Dorsolateral prefrontal cortex (tissue), 120 donors: ENCODE measurements at regions of chr1 and their contacts with region 1.

Region 1: DNA sequence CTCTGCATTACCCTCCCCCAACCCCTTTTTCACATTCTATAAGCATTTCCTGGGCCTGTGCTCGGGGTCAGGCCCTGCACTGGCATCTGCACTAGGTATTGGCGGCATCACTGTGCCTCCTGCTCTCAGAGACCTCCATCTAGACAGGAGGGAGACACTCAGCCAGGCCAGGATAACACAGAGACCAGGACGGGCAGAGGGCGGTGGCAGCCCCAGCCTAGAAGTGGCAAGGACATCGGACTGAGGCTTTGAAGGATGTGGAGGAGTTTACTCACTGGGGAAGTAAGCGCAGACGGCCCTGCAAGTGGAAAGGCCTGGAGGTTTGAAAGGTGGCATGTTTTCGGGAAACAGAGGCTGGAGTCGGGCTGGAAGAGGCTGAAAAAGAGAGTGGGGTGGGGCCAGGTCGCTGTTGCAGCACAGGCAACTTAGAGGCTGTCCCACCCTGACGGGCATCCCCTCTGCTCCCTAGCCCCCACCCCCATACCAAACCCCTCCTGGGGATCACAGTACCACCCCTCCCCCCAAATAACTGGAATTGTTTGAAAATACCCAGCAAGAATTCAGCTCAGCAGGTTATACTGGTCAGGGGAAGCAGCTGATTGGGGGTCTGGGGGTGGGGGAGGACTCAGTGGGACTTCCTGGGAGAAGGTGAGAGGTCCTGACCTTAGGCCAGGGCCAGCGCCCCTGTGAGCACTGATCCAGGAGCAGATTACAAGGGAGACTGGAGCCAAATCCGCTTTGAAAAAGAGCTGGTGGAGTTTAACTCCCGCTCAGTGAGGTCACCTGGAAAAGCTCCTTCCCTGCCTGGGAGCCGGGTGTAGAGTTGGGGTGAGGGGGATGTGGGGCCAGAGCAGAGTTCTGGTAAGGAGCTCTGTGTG is 121.8 kb upstream of the WNT4 start:
- DNase-seq: no peak
- H3K4me3 ChIP-seq: no peak overlapping the region
- H3K27ac ChIP-seq: no peak overlapping the region
- H3K27me3 ChIP-seq: peaks cover 0 to 12% (median 0%) of the 10 kb centered on the region in 45 donors
- CTCF ChIP-seq: no peak

Region 2: GRCh38 chr1:22247527-22248245 is 17.0 kb before region 1 on chr1:
- intact Hi-C with region 1: loop called in 1 of 2 experiments (anchors 1 kb)
- DNase-seq: no peak
- H3K4me3 ChIP-seq: no peak overlapping the region
- H3K27ac ChIP-seq: no peak overlapping the region
- H3K27me3 ChIP-seq: peaks cover 0 to 5% (median 0%) of the 10 kb centered on the region in 45 donors
- CTCF ChIP-seq: no peak